IMR-90 (cell line): ENCODE measurements at regions of chr13 and their contacts with region 1.

Region 1: GRCh38 chr13:85828149-85828548 is 28.9 kb upstream of the SLITRK6 start:
- DNase-seq: peak; percentile 30
- ATAC-seq: no peak
- H3K4me3 ChIP-seq: no peak overlapping the region
- H3K27ac ChIP-seq: no peak overlapping the region
- H3K4me1 ChIP-seq: no peaks in the 10 kb centered on the region
- H3K27me3 ChIP-seq: no peaks in the 10 kb centered on the region
- CTCF ChIP-seq: peak; percentile 57
- POLR2A ChIP-seq: no peak
- RAD21 ChIP-seq: peak; percentile 39; the same call in 1 of the 2 replicates

Region 2: GRCh38 chr13:84896128-84896527 is 932.0 kb before region 1 on chr13:
- CTCF ChIA-PET with region 1: interaction called, 4 read pairs
- POLR2A ChIA-PET with region 1: no interaction called
- dilution Hi-C with region 1: no loop called
- in situ Hi-C with region 1: no loop called
- intact Hi-C with region 1: loop called (anchors 1 kb)
- DNase-seq: peak; percentile 61
- ATAC-seq: peak; percentile 65
- H3K4me3 ChIP-seq: no peak overlapping the region
- H3K27ac ChIP-seq: no peak overlapping the region
- H3K4me1 ChIP-seq: no peaks in the 10 kb centered on the region
- H3K27me3 ChIP-seq: no peaks in the 10 kb centered on the region
- CTCF ChIP-seq: peak; percentile 75
- POLR2A ChIP-seq: no peak
- RAD21 ChIP-seq: peak; percentile 83

Region 3: GRCh38 chr13:84917252-84917878 is 910.8 kb before region 1 on chr13:
- CTCF ChIA-PET with region 1: no interaction called
- POLR2A ChIA-PET with region 1: no interaction called
- dilution Hi-C with region 1: no loop called
- in situ Hi-C with region 1: no loop called
- intact Hi-C with region 1: loop called (anchors 5 kb)
- DNase-seq: peak; percentile 31
- ATAC-seq: peak; percentile 82
- H3K4me3 ChIP-seq: no peak overlapping the region
- H3K27ac ChIP-seq: no peak overlapping the region
- H3K4me1 ChIP-seq: no peaks in the 10 kb centered on the region
- H3K27me3 ChIP-seq: no peaks in the 10 kb centered on the region
- CTCF ChIP-seq: peak; percentile 50
- POLR2A ChIP-seq: no peak
- RAD21 ChIP-seq: peak; percentile 42

Region 4: GRCh38 chr13:86309881-86310280 is 481.7 kb after region 1 on chr13:
- CTCF ChIA-PET with region 1: no interaction called
- POLR2A ChIA-PET with region 1: no interaction called
- dilution Hi-C with region 1: no loop called
- in situ Hi-C with region 1: no loop called
- intact Hi-C with region 1: no loop called
- DNase-seq: no peak
- ATAC-seq: no peak
- H3K4me3 ChIP-seq: no peak overlapping the region
- H3K27ac ChIP-seq: no peak overlapping the region
- H3K4me1 ChIP-seq: no peaks in the 10 kb centered on the region
- H3K27me3 ChIP-seq: no peaks in the 10 kb centered on the region
- CTCF ChIP-seq: no peak
- POLR2A ChIP-seq: no peak
- RAD21 ChIP-seq: no peak